ENCODE measurements at regions of chr3 and their contacts with region 1.

Region 1: GRCh38 chr3:114624571-114625181 is 330.8 kb downstream of the TIGIT start:
- DNase-seq: peak; percentile 72 to 93 (median 88)
- H3K4me3 ChIP-seq: peak overlapping the region; percentile 11 to 64 (median 47)
- H3K27ac ChIP-seq: peak overlapping the region; percentile 70 to 97 (median 91)
- H3K27me3 ChIP-seq: no peaks in the 10 kb centered on the region
- CTCF ChIP-seq: peak in 15 of 56 donors; percentile 4 to 28 (median 16)

Region 2: GRCh38 chr3:114454551-114455251 is 170.0 kb before region 1 on chr3:
- intact Hi-C with region 1: loop called in 1 of 2 experiments (anchors 10 kb)
- DNase-seq: peak in 4 of 10 donors; percentile 29 to 49 (median 42)
- H3K4me3 ChIP-seq: peak overlapping the region; percentile 31 to 76 (median 59)
- H3K27ac ChIP-seq: peak overlapping the region; percentile 36 to 99 (median 96)
- H3K27me3 ChIP-seq: no peaks in the 10 kb centered on the region
- CTCF ChIP-seq: peak in 1 of 56 donors; percentile 9

Region 3: GRCh38 chr3:114756506-114757279 is 132.0 kb after region 1 on chr3:
- intact Hi-C with region 1: loop called in 1 of 2 experiments (anchors 10 kb)
- DNase-seq: no peak
- H3K4me3 ChIP-seq: peak overlapping the region in 27 of 59 donors; percentile 1 to 64 (median 12)
- H3K27ac ChIP-seq: peak overlapping the region in 8 of 59 donors; percentile 2 to 49 (median 38)
- H3K27me3 ChIP-seq: no peaks in the 10 kb centered on the region
- CTCF ChIP-seq: peak in 1 of 56 donors; percentile 10

Region 4: GRCh38 chr3:114809668-114810413 is 185.2 kb after region 1 on chr3:
- intact Hi-C with region 1: no loop called
- DNase-seq: no peak
- H3K4me3 ChIP-seq: no peak overlapping the region
- H3K27ac ChIP-seq: no peak overlapping the region
- H3K27me3 ChIP-seq: no peaks in the 10 kb centered on the region
- CTCF ChIP-seq: no peak

Measured in dorsolateral prefrontal cortex (tissue), 120 donors.